K562 (cell line): ENCODE measurements at regions of chr19 and their contacts with region 1.

Region 1: GRCh38 chr19:52248241-52248640 is 21.1 kb upstream of the ZNF766 start:
- DNase-seq: peak in 2 of 4 experiments; percentile 36 to 56
- ATAC-seq: peak; percentile 75; the same call in 2 of the 3 replicates
- H3K4me3 ChIP-seq: no peak overlapping the region
- H3K27ac ChIP-seq: no peak overlapping the region
- H3K4me1 ChIP-seq: no peaks in the 10 kb centered on the region
- H3K27me3 ChIP-seq: no peaks in the 10 kb centered on the region
- CTCF ChIP-seq: peak; percentile 48 to 71 (median 54)
- EP300 ChIP-seq: no peak
- POLR2A ChIP-seq: no peak
- RAD21 ChIP-seq: peak; percentile 25 to 71; a peak in 3 of 4 replicates

Region 2: GRCh38 chr19:52464798-52465470 is 216.7 kb after region 1 on chr19:
- CTCF ChIA-PET with region 1: no interaction called
- POLR2A ChIA-PET with region 1: no interaction called
- in situ Hi-C with region 1: no loop called
- intact Hi-C with region 1: loop called (anchors 10 kb)
- DNase-seq: peak; percentile 48 to 64 (median 60)
- ATAC-seq: no peak
- H3K4me3 ChIP-seq: no peak overlapping the region
- H3K27ac ChIP-seq: no peak overlapping the region
- H3K4me1 ChIP-seq: no peaks in the 10 kb centered on the region
- H3K27me3 ChIP-seq: no peaks in the 10 kb centered on the region
- CTCF ChIP-seq: peak; percentile 53 to 68 (median 63)
- EP300 ChIP-seq: no peak
- POLR2A ChIP-seq: no peak
- RAD21 ChIP-seq: peak; percentile 35 to 71

Region 3: DNA sequence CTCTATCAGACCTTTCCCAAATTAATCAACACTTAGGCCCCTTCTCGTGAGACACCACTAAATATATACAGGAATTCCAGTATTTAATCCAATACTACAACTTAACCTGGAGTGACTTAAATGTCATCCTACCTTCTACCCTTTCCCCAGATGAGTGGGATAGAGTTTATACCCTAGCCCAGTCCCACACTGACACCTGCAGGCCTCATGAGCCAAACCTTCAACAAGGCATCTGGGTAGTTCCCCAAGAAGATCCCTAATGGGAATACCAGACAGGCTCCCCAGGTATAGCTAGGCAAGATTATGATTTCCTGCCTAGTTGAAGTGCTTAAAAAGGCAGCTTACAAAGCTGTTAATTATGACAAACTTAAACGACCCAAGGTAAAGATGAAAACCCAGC is 374.0 kb after region 1 on chr19:
- CTCF ChIA-PET with region 1: no interaction called
- POLR2A ChIA-PET with region 1: no interaction called
- in situ Hi-C with region 1: no loop called
- intact Hi-C with region 1: no loop called
- DNase-seq: no peak
- ATAC-seq: no peak
- H3K4me3 ChIP-seq: no peak overlapping the region
- H3K27ac ChIP-seq: no peak overlapping the region
- H3K4me1 ChIP-seq: no peaks in the 10 kb centered on the region; a peak in 2 of 5 replicates
- H3K27me3 ChIP-seq: no peaks in the 10 kb centered on the region
- CTCF ChIP-seq: peak in 2 of 3 experiments; percentile 16 to 18; a peak in 1 of 6 replicates
- EP300 ChIP-seq: no peak
- POLR2A ChIP-seq: no peak
- RAD21 ChIP-seq: peak in 1 of 2 experiments; percentile 26; a peak in 1 of 4 replicates

Region 4: GRCh38 chr19:52748336-52748950 is 500.2 kb after region 1 on chr19:
- CTCF ChIA-PET with region 1: no interaction called
- POLR2A ChIA-PET with region 1: no interaction called
- in situ Hi-C with region 1: no loop called
- intact Hi-C with region 1: loop called (anchors 2 kb)
- DNase-seq: peak in 2 of 4 experiments; percentile 10 to 56
- ATAC-seq: peak; percentile 36; the same call in 1 of the 3 replicates
- H3K4me3 ChIP-seq: no peak overlapping the region
- H3K27ac ChIP-seq: no peak overlapping the region
- H3K4me1 ChIP-seq: peaks cover 0 to 3% of the 10 kb centered on the region in 2 experiments; a peak in 3 of 5 replicates
- H3K27me3 ChIP-seq: no peaks in the 10 kb centered on the region
- CTCF ChIP-seq: peak; percentile 38 to 53 (median 39); a peak in 3 of 6 replicates
- EP300 ChIP-seq: no peak
- POLR2A ChIP-seq: no peak
- RAD21 ChIP-seq: peak in 1 of 2 experiments; percentile 64; a peak in 3 of 4 replicates